HepG2 (cell line): ENCODE measurements at regions of chr19 and their contacts with region 1.

Region 1: DNA sequence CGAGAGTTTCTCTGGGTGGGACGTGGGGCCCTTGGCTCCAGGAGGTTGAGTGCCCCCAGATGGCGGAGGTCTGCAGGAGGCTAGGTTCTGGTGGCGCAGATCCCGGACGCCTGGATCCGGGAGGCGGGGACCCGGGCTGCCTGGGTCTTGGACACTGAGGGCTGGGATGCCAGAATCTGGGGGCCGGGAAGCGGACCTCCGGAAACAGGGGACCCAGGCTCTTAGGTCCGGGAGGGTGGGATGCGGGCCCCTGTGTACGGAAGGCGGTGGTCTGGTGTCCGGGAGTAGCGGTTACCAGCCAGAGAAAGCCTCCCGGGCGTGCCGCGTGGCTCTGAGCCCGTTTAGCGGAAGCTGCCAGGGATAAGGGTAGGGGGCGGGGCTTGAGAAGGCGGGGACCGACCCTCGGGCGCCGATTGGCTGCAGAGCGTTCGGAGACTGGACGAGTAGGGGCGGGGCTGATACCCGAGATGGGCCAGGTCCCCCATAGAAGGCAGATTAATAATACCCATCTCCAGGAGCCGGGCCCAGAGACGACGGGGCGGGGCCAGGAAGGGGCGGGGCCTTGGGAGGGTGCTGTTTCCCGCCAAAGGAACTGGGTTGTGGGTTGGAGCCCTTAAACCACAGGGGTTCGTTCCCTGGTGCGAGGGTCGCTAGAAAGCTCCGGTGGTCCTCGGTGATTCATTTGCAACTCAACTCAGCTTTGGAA is at the start of gene SLC1A5:
- DNase-seq: peak; percentile 92
- ATAC-seq: peak; percentile 71
- H3K4me3 ChIP-seq: peak within 1 kb of the TSS; percentile 87 to 100 (median 98)
- H3K27ac ChIP-seq: peak within 1 kb of the TSS; percentile 82
- H3K4me1 ChIP-seq: peaks cover 52% of the 10 kb centered on the region
- H3K27me3 ChIP-seq: no peaks in the 10 kb centered on the region; a peak in 1 of 5 replicates
- CTCF ChIP-seq: peak; percentile 35
- EP300 ChIP-seq: no peak
- POLR2A ChIP-seq: peak; percentile 99 to 100
- RAD21 ChIP-seq: peak; percentile 52; the same call in 1 of the 2 replicates
- total RNA-seq, gene SLC1A5: 62.9 and 120 TPM in 2 replicates

Region 2: GRCh38 chr19:46256855-46257254 is 531.6 kb before region 1 on chr19:
- CTCF ChIA-PET with region 1: no interaction called
- POLR2A ChIA-PET with region 1: no interaction called
- in situ Hi-C with region 1: no loop called
- intact Hi-C with region 1: no loop called
- DNase-seq: no peak
- ATAC-seq: no peak
- H3K4me3 ChIP-seq: no peak overlapping the region
- H3K27ac ChIP-seq: no peak overlapping the region
- H3K4me1 ChIP-seq: no peaks in the 10 kb centered on the region
- H3K27me3 ChIP-seq: peaks cover 0 to 13% of the 10 kb centered on the region in 2 experiments; a peak in 3 of 5 replicates
- CTCF ChIP-seq: no peak
- EP300 ChIP-seq: no peak
- POLR2A ChIP-seq: no peak
- RAD21 ChIP-seq: no peak

Region 3: DNA sequence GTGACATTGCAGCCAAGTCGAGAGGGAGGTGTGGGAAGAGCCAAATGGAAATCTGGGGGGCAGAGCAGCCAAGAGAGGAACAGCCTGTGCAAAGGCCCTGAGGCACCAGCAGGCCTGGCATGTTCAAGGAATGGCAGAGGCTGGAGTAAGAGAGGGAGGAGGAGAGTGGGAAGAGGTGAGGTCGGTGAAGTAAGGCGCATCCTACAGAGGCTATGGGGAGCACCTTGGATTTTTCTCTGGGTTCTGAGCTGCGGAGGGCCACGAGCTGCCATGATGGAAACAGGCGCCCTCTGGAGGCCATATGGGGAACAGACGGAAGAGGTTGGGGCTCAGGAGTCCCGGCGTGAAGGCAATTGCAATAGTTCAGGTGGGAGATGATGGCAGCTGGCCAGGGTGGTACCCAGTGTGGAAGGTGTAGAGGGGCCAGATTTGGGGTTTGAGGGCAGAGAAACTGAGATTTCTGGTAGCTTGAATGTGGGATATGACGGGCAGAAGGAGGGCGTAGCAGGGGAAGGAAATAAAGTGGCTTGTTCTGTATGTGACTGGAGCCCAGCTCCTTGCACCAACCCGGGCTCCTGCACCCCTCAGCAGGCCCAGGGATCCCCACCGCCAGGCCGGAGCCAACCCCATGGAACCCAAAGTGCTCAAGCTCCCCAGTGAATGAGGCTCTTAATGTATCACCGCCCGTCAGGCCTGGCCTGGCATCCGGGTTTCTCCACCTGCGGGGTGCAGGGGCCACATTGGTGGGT is 21.7 kb before region 1 on chr19:
- CTCF ChIA-PET with region 1: no interaction called
- POLR2A ChIA-PET with region 1: interaction called, 14 read pairs
- in situ Hi-C with region 1: no loop called
- intact Hi-C with region 1: no loop called
- DNase-seq: peak; percentile 53
- ATAC-seq: peak; percentile 54
- H3K4me3 ChIP-seq: no peak overlapping the region
- H3K27ac ChIP-seq: no peak overlapping the region
- H3K4me1 ChIP-seq: peaks cover 66% of the 10 kb centered on the region
- H3K27me3 ChIP-seq: no peaks in the 10 kb centered on the region
- CTCF ChIP-seq: peak; percentile 79
- EP300 ChIP-seq: no peak; a peak in 1 of 4 replicates
- POLR2A ChIP-seq: no peak
- RAD21 ChIP-seq: peak; percentile 54

Region 4: DNA sequence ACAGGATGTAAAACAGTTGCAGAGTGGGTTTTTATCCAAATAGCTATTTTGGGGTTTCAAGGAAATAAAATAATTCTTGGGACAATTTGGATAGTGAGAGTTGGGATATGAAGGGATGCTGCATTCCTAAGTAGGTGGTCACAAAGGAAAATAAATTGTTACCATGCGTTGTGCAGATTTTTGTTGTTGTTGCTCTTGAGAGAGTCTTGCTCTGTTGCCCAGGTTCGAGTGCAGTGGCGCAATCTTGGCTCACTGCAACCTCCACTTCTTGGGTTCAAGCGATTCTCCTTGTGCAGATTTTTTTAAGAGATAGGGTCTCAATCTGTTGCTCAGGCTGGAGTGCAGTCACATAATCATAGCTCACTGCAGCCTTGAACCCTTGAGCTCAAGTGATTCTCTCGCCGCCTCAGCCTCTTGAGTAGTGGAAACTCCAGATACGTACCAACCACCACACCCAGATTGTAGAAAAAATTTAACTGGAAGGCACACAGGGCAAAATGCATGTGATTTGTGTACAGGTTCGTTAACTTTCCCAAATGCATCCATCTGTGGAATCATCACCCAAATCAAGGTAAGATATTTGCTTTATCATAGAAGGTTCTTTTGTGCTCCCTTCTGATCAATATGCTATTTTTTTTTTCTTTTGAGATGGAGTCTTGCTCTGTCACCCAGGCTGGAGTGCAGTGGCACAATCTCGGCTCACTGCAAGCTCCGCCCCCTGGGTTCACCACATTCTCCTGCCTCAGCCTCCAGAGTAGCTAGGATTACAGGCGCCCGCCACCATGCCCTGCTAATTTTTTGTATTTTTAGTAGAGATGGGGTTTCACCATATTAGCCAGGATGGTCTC is 16.0 kb before region 1 on chr19:
- CTCF ChIA-PET with region 1: no interaction called
- POLR2A ChIA-PET with region 1: interaction called, 14 read pairs
- in situ Hi-C with region 1: no loop called
- intact Hi-C with region 1: no loop called
- DNase-seq: no peak
- ATAC-seq: no peak
- H3K4me3 ChIP-seq: no peak overlapping the region
- H3K27ac ChIP-seq: no peak overlapping the region
- H3K4me1 ChIP-seq: peaks cover 50% of the 10 kb centered on the region
- H3K27me3 ChIP-seq: no peaks in the 10 kb centered on the region
- CTCF ChIP-seq: no peak
- EP300 ChIP-seq: no peak
- POLR2A ChIP-seq: no peak
- RAD21 ChIP-seq: no peak

Region 5: DNA sequence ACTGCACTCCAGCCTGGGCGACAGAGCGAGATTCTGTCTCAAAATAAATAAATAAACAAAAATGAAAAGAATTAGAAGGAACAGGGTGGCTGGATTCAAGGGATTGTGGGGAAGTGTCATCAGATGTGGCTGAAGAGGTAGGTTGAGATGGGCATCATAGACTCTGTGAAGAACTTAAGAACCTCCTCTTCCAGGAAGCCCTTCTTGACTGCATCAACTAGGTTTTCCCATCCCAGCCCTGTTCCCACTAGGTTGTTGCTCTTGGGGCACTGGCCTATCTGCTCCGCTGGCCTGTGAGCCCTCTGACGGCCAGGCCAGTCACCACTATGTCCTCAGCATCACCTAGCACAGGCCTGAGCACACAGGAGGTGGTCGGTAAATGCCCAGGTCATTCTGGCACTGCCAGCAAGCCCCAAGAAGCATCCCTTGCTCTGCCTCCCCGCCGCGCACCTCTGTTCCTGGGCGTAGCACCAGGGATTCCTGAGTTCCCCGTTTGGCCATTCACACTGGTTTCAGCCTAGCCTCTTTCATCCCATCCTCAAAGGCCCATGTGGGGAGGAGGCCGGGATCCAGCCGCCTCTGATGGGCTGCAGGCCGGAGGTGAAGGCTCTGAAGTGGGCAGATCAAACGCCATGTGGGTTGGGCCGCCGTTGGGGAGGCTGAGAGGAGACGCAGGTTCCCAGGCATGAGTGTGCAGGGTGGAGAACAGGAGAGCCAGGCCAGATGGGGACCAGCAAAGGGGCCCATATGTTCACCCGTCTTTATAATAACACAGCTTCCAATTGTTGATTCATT is 27.6 kb after region 1 on chr19:
- CTCF ChIA-PET with region 1: no interaction called
- POLR2A ChIA-PET with region 1: interaction called, 66 read pairs
- in situ Hi-C with region 1: no loop called
- intact Hi-C with region 1: loop called (anchors 2 kb)
- DNase-seq: peak; percentile 67
- ATAC-seq: peak; percentile 43
- H3K4me3 ChIP-seq: no peak overlapping the region
- H3K27ac ChIP-seq: no peak overlapping the region
- H3K4me1 ChIP-seq: peaks cover 65% of the 10 kb centered on the region
- H3K27me3 ChIP-seq: peaks cover 0 to 14% of the 10 kb centered on the region in 2 experiments; a peak in 4 of 5 replicates
- CTCF ChIP-seq: 0 out of 2 replicates have a peak, but pooled peaks have one; percentile 15
- EP300 ChIP-seq: no peak
- POLR2A ChIP-seq: no peak
- RAD21 ChIP-seq: no peak

Region 6: DNA sequence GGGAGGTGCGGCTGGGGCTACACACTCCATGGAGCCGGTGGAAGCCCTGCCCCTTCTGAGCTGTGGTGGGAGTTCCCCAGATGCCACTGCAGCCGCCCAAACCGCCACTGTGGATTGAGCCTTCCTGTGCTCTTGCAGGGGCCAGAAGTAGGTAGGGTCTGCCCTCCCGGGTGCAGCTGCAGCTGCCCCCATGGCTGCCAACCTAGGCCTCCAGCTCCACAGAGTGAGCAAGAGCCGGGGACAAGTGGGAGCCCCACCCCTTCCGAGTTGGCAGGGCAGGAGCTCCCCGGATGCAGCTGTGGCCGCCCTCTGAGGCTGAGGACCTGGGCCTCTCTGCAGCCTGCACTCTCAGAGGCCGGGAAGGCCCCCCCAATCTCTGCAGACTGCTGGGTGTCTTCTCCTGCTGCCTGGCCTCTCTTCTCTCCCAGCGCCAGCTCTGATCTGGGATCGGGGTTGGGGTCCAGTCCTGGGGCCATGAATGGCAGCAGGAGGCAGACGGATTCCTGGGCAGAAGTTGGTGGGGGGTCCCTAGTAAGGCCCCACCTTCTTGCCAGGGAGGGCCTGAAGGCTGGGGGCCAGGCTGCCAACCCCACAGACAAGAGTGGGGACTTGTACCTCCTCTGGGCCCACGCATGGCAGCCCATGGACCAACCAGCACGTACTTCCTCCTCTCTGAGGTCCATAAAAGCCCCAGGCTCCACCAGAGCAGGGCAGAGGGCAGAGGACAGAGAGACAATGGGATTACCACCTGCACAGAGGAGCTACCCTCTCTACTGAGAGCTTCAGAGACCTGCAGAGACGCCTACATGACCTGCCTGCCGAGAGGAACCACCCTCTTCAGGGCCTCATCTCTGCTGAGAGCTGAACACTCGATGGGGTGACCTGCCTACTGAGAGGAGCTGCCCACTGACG is 33.3 kb after region 1 on chr19:
- CTCF ChIA-PET with region 1: no interaction called
- POLR2A ChIA-PET with region 1: interaction called, 66 read pairs
- in situ Hi-C with region 1: no loop called
- intact Hi-C with region 1: loop called (anchors 2 kb)
- DNase-seq: no peak
- ATAC-seq: peak; percentile 85
- H3K4me3 ChIP-seq: peak overlapping the region; percentile 52 to 72 (median 55)
- H3K27ac ChIP-seq: peak overlapping the region; percentile 48
- H3K4me1 ChIP-seq: peaks cover 41% of the 10 kb centered on the region
- H3K27me3 ChIP-seq: peaks cover 0 to 2% of the 10 kb centered on the region in 2 experiments; a peak in 1 of 5 replicates
- CTCF ChIP-seq: no peak
- EP300 ChIP-seq: no peak
- POLR2A ChIP-seq: peak; percentile 38 to 76; a peak in 1 of 4 replicates
- RAD21 ChIP-seq: no peak

Region 7: DNA sequence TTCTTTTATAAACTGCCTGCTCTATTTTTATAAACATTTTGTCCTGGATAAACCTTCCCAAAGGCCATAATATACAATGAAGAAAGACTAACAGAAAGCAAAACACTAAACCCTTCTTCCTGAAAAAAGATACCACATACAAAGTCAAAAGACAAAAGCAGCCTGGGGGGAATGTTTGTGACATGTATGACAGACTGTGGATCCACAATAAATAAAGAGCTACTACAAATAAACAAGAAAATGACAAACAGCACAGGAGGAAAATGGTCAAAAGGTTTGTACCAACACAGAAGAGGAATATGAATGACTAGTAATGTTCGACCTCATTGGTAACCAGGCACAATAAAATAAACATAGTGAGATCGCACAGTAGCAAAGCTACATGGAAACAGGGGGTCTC is 42.4 kb after region 1 on chr19:
- CTCF ChIA-PET with region 1: no interaction called
- POLR2A ChIA-PET with region 1: interaction called, 13 read pairs
- in situ Hi-C with region 1: no loop called
- intact Hi-C with region 1: no loop called
- DNase-seq: no peak
- ATAC-seq: no peak
- H3K4me3 ChIP-seq: no peak overlapping the region
- H3K27ac ChIP-seq: no peak overlapping the region
- H3K4me1 ChIP-seq: peaks cover 31% of the 10 kb centered on the region
- H3K27me3 ChIP-seq: no peaks in the 10 kb centered on the region
- CTCF ChIP-seq: no peak
- EP300 ChIP-seq: no peak
- POLR2A ChIP-seq: no peak
- RAD21 ChIP-seq: no peak

Region 8: DNA sequence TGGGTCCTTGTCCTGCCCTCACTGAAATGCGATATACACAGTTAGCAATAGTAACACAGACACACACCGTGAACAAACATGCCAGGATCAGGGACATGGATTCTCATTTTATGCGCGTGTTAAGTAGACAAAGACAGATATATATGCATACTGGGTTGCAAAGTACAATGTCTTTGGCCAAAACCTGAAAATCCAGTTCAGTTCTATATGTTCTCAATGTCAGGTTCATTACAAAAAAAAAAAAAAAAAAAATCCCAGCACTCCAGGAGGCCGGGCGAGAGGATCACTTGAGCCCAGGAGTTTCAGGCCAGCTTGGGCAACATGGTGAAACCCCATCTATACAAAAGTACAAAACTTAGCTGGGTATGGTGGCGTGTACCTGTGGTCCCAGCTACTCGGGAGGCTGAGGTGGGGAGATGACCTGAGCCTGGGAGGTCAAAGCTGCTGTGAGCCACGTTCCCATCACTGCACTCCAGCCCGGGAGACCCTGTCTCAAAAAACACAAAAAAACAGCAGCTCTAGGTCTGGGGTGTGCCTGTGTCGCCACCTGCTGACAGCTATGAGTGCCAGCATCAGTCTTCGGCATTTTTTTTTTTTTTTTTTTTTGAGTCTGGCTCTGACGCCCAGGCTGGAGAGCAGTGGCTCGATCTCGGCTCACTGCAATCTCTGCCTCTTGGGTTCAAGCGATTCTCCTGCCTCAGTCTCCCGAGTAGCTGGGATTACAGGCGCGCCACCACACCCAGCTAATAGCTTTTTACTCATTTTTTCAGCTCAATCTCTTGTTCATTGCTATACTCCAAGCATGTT is 51.9 kb after region 1 on chr19:
- CTCF ChIA-PET with region 1: no interaction called
- POLR2A ChIA-PET with region 1: interaction called, 21 read pairs
- in situ Hi-C with region 1: loop called (anchors 5 kb)
- intact Hi-C with region 1: no loop called
- DNase-seq: peak; percentile 63
- ATAC-seq: peak; percentile 65
- H3K4me3 ChIP-seq: no peak overlapping the region
- H3K27ac ChIP-seq: no peak overlapping the region
- H3K4me1 ChIP-seq: peaks cover 31% of the 10 kb centered on the region
- H3K27me3 ChIP-seq: no peaks in the 10 kb centered on the region
- CTCF ChIP-seq: peak; percentile 92
- EP300 ChIP-seq: no peak
- POLR2A ChIP-seq: no peak
- RAD21 ChIP-seq: peak; percentile 86

Region 9: GRCh38 chr19:47143322-47144073 is 355.1 kb after region 1 on chr19:
- CTCF ChIA-PET with region 1: no interaction called
- POLR2A ChIA-PET with region 1: no interaction called
- in situ Hi-C with region 1: no loop called
- intact Hi-C with region 1: no loop called
- DNase-seq: no peak
- ATAC-seq: no peak
- H3K4me3 ChIP-seq: no peak overlapping the region
- H3K27ac ChIP-seq: no peak overlapping the region
- H3K4me1 ChIP-seq: no peaks in the 10 kb centered on the region
- H3K27me3 ChIP-seq: no peaks in the 10 kb centered on the region
- CTCF ChIP-seq: no peak
- EP300 ChIP-seq: no peak
- POLR2A ChIP-seq: no peak
- RAD21 ChIP-seq: no peak